GM23248 (cell line): ENCODE measurements at regions of chr2 and their contacts with region 1.

Region 1: DNA sequence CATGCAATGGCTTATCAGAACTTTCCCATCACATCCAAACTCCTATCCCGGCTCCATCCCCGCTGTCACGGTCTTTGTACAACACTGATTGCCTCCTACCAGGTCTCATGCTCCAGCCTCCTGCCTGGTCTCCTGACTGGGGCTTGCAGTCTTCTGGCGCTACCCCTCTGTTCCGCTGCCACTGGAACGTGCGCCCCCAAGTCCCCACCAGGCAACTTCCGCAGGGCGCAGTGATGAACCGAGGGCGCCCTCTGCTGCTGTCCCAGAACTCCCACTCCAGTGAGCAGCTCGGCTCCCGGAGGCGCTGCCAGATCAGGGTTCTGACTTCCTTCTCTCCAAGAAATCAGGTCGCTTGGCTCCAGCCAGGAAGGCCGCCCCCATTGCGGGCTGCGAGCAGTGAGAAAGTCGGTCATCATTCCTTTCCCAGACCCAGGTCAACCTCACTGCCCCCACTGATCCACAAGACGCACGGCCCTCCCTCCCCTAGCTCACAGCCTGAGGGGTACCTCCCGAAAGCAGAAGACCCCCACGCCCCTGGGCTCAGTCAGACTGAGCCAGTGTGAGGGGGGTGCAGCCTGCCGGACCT is 43.9 kb upstream of the RAB11FIP5 start:
- DNase-seq: peak; percentile 84
- H3K4me3 ChIP-seq: peak overlapping the region; percentile 63
- H3K27ac ChIP-seq: no peak overlapping the region
- H3K4me1 ChIP-seq: peaks cover 4% of the 10 kb centered on the region; the same call in 1 of the 2 replicates
- H3K27me3 ChIP-seq: no peaks in the 10 kb centered on the region

Region 2: GRCh38 chr2:72993147-72993932 is 163.3 kb before region 1 on chr2:
- in situ Hi-C with region 1: loop called (anchors 10 kb)
- DNase-seq: peak; percentile 35
- H3K4me3 ChIP-seq: no peak overlapping the region
- H3K27ac ChIP-seq: no peak overlapping the region
- H3K4me1 ChIP-seq: no peaks in the 10 kb centered on the region
- H3K27me3 ChIP-seq: no peaks in the 10 kb centered on the region

Region 3: DNA sequence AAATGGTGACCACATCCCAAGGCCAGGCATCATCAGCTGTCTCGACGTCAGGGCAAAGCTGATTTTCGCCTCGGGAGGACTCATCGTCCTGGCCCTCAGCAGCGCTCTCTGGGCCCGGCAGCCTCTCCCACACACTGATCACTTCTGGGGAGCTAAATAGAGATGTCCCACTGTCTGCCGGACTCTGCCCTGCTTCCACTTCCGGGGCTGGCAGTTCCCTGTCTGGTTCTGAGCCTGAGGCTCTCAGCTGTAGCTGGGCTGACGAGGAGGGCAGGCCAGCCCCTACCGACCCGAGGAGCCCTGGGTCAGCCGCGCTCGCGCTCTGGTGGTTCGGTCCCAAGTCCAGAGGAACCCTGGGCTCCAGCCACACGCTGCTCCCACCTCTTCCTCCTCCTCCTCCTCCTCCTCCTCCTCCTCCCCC is 75.9 kb before region 1 on chr2:
- in situ Hi-C with region 1: loop called (anchors 5 kb)
- DNase-seq: no peak
- H3K4me3 ChIP-seq: no peak overlapping the region
- H3K27ac ChIP-seq: no peak overlapping the region
- H3K4me1 ChIP-seq: no peaks in the 10 kb centered on the region
- H3K27me3 ChIP-seq: no peaks in the 10 kb centered on the region

Region 4: GRCh38 chr2:73324126-73324725 is 167.6 kb after region 1 on chr2:
- in situ Hi-C with region 1: no loop called
- DNase-seq: no peak
- H3K4me3 ChIP-seq: no peak overlapping the region
- H3K27ac ChIP-seq: no peak overlapping the region
- H3K4me1 ChIP-seq: no peaks in the 10 kb centered on the region
- H3K27me3 ChIP-seq: peaks cover 57% of the 10 kb centered on the region

Region 5: GRCh38 chr2:73359915-73360697 is 203.5 kb after region 1 on chr2:
- in situ Hi-C with region 1: no loop called
- DNase-seq: peak; percentile 36
- H3K4me3 ChIP-seq: no peak overlapping the region
- H3K27ac ChIP-seq: no peak overlapping the region
- H3K4me1 ChIP-seq: no peaks in the 10 kb centered on the region
- H3K27me3 ChIP-seq: peaks cover 4% of the 10 kb centered on the region; the same call in 1 of the 2 replicates